ENCODE measurements at regions of chr19 and their contacts with region 1.

Region 1: GRCh38 chr19:13244920-13245319 is 94.7 kb downstream of the IER2 start:
- DNase-seq: no peak
- ATAC-seq: no peak
- H3K4me3 ChIP-seq: no peak overlapping the region
- H3K4me3 Mint-ChIP-seq: no peak overlapping the region
- H3K27ac ChIP-seq: no peak overlapping the region
- H3K27ac Mint-ChIP-seq: no peak overlapping the region
- H3K4me1 ChIP-seq: peaks cover 4 to 13% of the 10 kb centered on the region in 2 experiments
- H3K4me1 Mint-ChIP-seq: peaks cover 11 to 23% (median 12%) of the 10 kb centered on the region in 3 donors
- H3K27me3 ChIP-seq: peaks cover 0 to 35% of the 10 kb centered on the region in 2 experiments
- H3K27me3 Mint-ChIP-seq: peaks cover 0 to 4% of the 10 kb centered on the region in 2 donors

Region 2: DNA sequence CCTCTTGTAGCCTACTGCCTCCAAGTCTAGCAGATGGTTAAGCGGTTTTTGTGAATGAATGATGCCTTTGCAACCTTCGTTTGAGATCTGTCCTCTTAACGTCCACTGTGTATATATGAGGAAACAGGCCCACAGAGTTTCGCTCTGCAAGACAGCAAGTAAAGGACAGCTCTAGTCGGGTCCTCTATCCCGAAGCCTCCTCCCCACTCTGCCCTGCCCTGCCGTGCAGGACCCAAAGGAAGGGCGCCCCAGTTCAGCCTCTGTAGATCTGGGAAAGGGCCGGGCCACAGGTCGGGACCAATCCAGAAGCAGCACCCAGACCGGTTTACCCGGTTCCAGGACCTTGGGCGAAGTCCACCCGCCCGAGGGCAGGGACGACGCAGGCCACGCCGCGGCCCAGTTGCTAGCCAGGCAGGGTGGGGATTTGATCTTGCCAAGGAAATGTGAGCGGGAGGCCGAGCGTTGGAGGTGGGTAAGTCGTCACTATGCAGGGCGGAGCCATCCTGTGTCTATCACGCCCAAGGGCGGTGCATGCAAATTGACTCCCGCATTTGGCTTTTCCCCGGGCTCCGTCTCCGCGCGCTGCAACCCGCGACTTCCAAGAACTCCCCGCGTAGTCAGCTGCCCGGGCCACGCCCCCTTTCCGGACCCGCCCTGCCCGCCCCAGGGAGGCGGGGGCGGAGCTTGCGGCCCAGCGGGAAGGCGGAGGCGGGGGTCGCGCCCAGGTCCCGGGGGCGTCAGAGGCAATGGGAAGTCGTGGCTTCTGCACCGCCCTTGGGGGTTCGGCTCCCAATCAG is 82.2 kb before region 1 on chr19:
- CTCF ChIA-PET with region 1: no interaction called
- POLR2A ChIA-PET with region 1: no interaction called
- DNase-seq: peak; percentile 56 to 91 (median 68)
- ATAC-seq: peak; percentile 49 to 67 (median 59)
- H3K4me3 ChIP-seq: peak overlapping the region; percentile 62 to 67
- H3K4me3 Mint-ChIP-seq: peak overlapping the region; percentile 79 to 82 (median 82)
- H3K27ac ChIP-seq: peak overlapping the region; percentile 87
- H3K27ac Mint-ChIP-seq: peak overlapping the region; percentile 99 to 100
- H3K4me1 ChIP-seq: peaks cover 42 to 87% of the 10 kb centered on the region in 2 experiments
- H3K4me1 Mint-ChIP-seq: peaks cover 70 to 83% (median 73%) of the 10 kb centered on the region in 3 donors
- H3K27me3 ChIP-seq: no peaks in the 10 kb centered on the region
- H3K27me3 Mint-ChIP-seq: no peaks in the 10 kb centered on the region

Region 3: DNA sequence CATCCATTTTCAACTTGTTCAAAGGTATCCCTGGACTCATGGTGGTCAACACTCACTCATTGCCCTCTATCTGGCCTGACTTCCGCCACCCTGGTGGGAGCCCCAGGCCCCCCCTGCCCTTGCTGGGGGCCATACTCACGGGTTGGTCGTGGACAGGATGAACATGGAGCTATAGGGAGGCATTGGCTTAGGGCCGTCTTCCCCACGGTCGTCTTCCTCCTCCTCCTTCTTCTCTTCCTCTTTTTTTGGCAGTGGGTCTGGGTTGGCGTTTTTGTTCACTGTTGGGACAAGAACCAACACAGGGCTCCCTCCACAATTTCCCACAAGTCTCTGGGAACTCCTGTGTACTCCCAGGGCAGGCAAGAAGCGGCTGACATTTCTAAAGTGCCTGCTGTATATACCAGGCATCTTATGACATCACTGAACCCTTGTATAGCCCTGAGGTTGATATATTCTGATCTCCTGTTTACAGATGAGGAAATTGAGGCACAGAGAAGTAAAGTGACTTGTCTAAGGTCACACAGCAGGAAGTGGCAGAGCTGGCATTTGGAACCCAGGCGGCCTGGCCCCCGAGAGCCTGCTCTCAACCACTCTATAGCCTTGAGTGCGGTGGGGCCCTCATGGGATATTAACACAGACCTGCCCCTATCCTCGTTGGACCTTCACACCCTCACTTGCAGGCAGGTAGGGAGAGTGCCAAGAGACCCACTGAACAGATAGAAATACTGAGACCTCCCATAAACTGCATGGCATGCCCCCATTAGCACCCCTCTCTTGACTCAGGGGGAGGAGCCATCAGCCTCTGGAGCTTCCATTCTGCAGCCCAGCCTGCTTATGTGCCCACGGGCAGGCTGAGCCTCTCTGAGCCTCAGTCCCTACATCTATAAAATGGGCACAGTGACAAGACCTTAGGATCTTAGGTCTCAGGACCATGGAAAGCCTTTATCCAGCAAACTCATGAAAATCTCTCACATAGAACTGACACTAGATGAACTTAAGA is 40.3 kb after region 1 on chr19:
- CTCF ChIA-PET with region 1: no interaction called
- POLR2A ChIA-PET with region 1: no interaction called
- DNase-seq: no peak
- ATAC-seq: no peak
- H3K4me3 ChIP-seq: no peak overlapping the region
- H3K4me3 Mint-ChIP-seq: no peak overlapping the region
- H3K27ac ChIP-seq: no peak overlapping the region
- H3K27ac Mint-ChIP-seq: no peak overlapping the region
- H3K4me1 ChIP-seq: no peaks in the 10 kb centered on the region
- H3K4me1 Mint-ChIP-seq: no peaks in the 10 kb centered on the region
- H3K27me3 ChIP-seq: peaks cover 0 to 40% of the 10 kb centered on the region in 2 experiments
- H3K27me3 Mint-ChIP-seq: peaks cover 4 to 9% of the 10 kb centered on the region in 2 donors

Region 4: GRCh38 chr19:13303381-13304129 is 58.6 kb after region 1 on chr19:
- CTCF ChIA-PET with region 1: no interaction called
- POLR2A ChIA-PET with region 1: no interaction called
- DNase-seq: no peak
- ATAC-seq: no peak
- H3K4me3 ChIP-seq: no peak overlapping the region
- H3K4me3 Mint-ChIP-seq: no peak overlapping the region
- H3K27ac ChIP-seq: no peak overlapping the region
- H3K27ac Mint-ChIP-seq: no peak overlapping the region
- H3K4me1 ChIP-seq: peaks cover 0 to 2% of the 10 kb centered on the region in 2 experiments
- H3K4me1 Mint-ChIP-seq: peaks cover 6 to 7% (median 6%) of the 10 kb centered on the region in 3 donors
- H3K27me3 ChIP-seq: peaks cover 2 to 56% of the 10 kb centered on the region in 2 experiments
- H3K27me3 Mint-ChIP-seq: peaks cover 43 to 68% of the 10 kb centered on the region in 2 donors

Region 5: DNA sequence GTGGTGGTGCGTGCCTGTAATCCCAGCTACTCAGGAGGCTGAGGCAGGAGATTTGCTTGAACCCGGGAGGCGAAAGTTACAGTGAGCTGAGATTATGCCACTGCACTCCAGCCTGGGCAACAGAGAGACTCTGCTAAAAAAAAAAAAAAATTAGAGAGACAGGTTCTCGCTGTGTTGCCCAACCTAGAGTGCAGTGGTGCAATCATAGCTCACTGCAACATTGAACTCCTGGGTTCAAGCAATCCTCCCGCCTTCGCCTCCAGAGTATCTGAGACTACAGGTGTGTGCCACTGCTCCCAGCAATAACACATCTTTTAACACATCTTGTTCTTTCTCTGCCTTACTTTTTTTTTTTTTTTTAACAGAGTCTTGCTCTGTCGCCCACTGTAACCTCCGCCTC is 1370.7 kb after region 1 on chr19:
- CTCF ChIA-PET with region 1: no interaction called
- POLR2A ChIA-PET with region 1: interaction called in 1 of 2 experiments, 10 read pairs
- DNase-seq: no peak
- ATAC-seq: no peak
- H3K4me3 ChIP-seq: no peak overlapping the region
- H3K4me3 Mint-ChIP-seq: no peak overlapping the region
- H3K27ac ChIP-seq: no peak overlapping the region
- H3K27ac Mint-ChIP-seq: no peak overlapping the region
- H3K4me1 ChIP-seq: no peaks in the 10 kb centered on the region
- H3K4me1 Mint-ChIP-seq: peaks cover 0 to 4% (median 4%) of the 10 kb centered on the region in 3 donors
- H3K27me3 ChIP-seq: peaks cover 0 to 3% of the 10 kb centered on the region in 2 experiments
- H3K27me3 Mint-ChIP-seq: peaks cover 3 to 9% of the 10 kb centered on the region in 2 donors